ENCODE measurements at regions of chr4 and their contacts with region 1.

Region 1: GRCh38 chr4:55948726-55949474 is at the start of gene CEP135:
- DNase-seq: peak; percentile 96
- H3K4me3 Mint-ChIP-seq: peak within 1 kb of the TSS; percentile 80
- H3K27ac Mint-ChIP-seq: peak within 1 kb of the TSS; percentile 91
- H3K4me1 Mint-ChIP-seq: peaks cover 35% of the 10 kb centered on the region
- H3K27me3 Mint-ChIP-seq: no peaks in the 10 kb centered on the region
- total RNA-seq, gene CEP135: 15.5 to 16.8 TPM

Region 2: DNA sequence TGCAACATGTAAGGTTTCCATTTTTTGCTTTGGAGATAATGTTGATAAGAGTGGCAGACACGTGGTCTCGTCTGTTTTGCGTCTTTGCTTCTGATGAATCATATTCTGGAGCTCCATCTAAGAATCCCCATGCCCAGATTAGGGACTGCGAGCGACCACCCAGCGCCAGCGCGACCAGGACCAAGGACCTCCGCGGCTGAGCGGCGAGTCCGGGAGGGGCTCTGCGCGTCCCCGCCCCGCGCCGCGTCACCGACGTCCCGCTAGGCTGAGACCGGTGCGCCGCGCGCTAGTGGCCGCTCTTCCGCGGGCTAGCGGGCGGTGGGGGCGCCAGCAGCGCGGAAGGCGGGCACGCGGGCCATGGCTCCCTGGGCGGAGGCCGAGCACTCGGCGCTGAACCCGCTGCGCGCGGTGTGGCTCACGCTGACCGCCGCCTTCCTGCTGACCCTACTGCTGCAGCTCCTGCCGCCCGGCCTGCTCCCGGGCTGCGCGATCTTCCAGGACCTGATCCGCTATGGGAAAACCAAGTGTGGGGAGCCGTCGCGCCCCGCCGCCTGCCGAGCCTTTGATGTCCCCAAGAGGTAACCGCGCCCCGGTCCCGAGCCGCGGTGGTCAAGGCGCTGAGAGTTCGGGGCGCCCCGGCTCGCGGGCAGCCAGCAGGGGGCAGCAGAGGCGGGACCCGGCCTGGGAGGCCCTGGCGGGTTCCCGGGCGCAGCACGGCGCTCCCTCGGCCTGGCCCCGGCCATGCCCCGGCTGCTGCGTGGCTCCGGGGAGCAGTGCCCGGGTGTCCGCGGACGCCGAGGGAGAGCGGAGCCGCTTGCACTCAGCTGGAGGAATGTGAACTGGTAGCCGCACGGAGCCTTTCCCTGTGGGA is 602.7 kb before region 1 on chr4 and contains the start of gene SRD5A3:
- CTCF ChIA-PET with region 1: interaction called, 4 read pairs
- POLR2A ChIA-PET with region 1: no interaction called
- intact Hi-C with region 1: loop called (anchors 1 kb)
- DNase-seq: peak; percentile 85
- H3K4me3 Mint-ChIP-seq: peak within 1 kb of the TSS; percentile 82
- H3K27ac Mint-ChIP-seq: peak within 1 kb of the TSS; percentile 84
- H3K4me1 Mint-ChIP-seq: peaks cover 28% of the 10 kb centered on the region
- H3K27me3 Mint-ChIP-seq: no peaks in the 10 kb centered on the region
- total RNA-seq, gene SRD5A3: 19.2 to 19.7 TPM

Region 3: DNA sequence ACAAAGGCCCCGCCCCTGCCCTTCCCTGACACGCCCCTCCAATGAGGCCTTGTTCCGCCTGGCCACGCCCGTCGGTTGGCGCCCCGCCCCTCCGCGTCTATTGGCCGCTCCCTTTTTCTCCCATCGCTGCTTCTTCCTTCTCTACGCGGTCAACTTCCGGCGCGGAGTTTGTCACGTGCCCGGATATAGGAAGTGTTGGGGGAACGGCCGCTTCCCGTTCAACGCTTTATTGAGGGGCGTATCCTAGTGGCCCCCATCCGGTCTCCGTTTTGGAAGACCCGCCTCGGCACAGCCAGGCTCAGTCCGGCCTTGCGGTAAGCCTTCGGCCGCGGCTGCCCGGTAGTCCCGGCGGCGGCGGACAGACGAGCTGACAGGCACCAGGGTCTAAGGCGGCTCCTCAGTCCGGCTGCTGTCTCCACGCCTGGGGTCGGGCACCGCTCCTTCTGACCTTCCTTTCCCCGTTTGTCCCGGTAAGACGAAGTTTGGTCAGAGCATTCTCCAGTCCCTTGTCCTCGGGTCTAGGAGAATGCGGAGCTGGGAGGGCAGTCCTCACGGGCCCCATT is 95.3 kb before region 1 on chr4 and contains the start of gene EXOC1:
- CTCF ChIA-PET with region 1: interaction called, 4 read pairs
- POLR2A ChIA-PET with region 1: no interaction called
- intact Hi-C with region 1: loop called (anchors 1 kb)
- DNase-seq: peak; percentile 99
- H3K4me3 Mint-ChIP-seq: peak within 1 kb of the TSS; percentile 7
- H3K27ac Mint-ChIP-seq: peak within 1 kb of the TSS; percentile 82
- H3K4me1 Mint-ChIP-seq: peaks cover 33% of the 10 kb centered on the region
- H3K27me3 Mint-ChIP-seq: no peaks in the 10 kb centered on the region
- total RNA-seq, gene EXOC1: 21.9 to 22.4 TPM

Region 4: DNA sequence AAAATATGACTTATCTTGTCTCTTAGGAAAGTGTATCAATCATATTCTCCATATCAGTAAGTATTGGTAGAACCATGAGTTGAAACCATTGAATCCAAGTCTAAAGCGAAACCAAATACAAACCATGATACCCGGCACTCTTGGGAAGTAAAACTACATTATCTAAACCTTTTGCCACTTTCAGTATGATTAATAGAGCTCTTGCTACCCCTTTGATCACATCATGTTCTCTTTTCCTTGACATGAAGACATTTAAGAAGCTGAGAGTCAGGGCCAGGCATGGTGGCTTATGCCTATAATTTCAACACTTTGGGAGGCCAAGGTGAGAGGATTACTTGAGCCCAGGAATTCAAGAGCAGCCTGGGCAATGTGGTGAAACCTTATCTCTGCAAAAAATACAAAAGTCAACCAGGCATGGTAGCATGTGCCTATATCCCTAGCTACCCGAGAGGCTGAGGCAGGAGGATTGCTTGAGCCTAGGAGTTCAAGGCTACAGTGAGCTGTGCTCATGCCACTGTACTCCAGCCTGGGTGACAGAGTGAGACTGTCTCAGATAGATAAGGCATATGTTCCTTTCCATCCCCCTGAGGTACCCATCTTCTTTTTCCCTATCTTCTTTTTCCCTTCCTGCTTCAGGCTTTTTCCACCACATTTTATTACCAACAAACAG is 45.2 kb after region 1 on chr4:
- CTCF ChIA-PET with region 1: interaction called, 6 read pairs
- POLR2A ChIA-PET with region 1: no interaction called
- intact Hi-C with region 1: loop called (anchors 1 kb)
- DNase-seq: peak; percentile 20
- H3K4me3 Mint-ChIP-seq: no peak overlapping the region
- H3K27ac Mint-ChIP-seq: no peak overlapping the region
- H3K4me1 Mint-ChIP-seq: peaks cover 28% of the 10 kb centered on the region
- H3K27me3 Mint-ChIP-seq: no peaks in the 10 kb centered on the region

Region 5: DNA sequence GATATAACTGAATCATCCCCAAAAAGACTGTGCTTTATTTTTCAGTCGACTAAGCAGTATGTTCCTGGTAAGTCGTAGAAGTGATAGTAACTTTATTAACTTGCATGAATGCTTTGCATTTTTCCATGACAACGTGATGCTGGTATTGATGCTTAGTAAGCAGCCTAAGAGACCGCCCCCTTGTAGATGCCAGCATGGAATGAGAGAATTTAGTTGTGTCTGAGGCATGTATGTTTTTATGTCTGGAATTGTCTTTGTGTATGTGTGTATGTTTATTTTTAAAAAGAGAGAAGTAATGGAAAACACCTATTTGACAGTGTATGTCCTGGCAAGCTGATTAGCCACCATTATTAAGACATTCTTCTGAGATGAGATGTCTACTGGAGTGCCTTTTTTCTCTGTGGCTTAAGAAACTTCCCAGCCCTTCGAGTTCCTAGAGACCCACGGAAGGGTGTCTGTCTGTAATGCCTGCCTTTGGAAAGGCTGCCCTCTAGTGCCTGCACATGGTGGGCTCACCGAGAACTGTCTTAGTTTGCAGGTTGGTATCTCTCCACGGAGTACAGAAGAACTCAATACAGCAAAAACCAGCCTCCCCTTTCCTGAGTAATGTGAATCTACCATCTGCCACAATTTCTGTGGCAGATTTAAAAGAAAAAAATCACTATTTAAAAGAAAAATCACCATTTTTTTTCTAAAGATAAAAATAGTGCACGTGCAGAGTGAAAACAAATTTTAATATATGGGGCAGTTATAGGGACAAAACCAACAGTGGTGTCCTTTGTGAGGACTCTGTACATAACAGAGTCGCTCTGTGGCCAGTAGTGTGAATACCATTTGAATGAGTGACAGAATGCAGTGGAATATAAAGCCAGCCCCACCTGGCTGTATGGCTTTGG is 352.5 kb after region 1 on chr4:
- CTCF ChIA-PET with region 1: interaction called, 9 read pairs
- POLR2A ChIA-PET with region 1: no interaction called
- intact Hi-C with region 1: loop called (anchors 1 kb)
- DNase-seq: peak; percentile 78
- H3K4me3 Mint-ChIP-seq: peak overlapping the region; percentile 13
- H3K27ac Mint-ChIP-seq: no peak overlapping the region
- H3K4me1 Mint-ChIP-seq: peaks cover 7% of the 10 kb centered on the region
- H3K27me3 Mint-ChIP-seq: no peaks in the 10 kb centered on the region

Region 6: DNA sequence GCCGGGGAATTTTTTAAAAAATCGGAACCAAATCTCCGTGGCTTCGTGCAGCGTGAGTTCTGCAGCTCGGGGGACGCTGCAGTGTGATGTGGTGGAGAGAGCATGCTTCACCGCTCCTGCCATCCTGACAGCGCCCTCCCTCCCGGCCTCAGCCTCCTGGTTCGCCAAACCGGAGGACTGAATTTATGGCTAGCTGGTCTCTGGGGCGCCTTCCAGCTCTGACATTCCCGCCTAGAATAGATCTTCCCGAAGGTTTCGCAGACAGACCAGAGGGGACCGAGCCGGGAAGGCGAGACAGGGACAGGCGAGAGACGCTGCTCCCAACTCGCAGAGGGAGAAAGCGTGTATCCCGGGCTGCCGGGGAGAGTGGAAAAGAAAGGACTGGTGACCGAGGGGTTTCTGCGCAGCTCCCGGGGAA is 706.3 kb after region 1 on chr4:
- CTCF ChIA-PET with region 1: no interaction called
- POLR2A ChIA-PET with region 1: no interaction called
- intact Hi-C with region 1: loop called (anchors 10 kb)
- DNase-seq: peak; percentile 31
- H3K4me3 Mint-ChIP-seq: peak overlapping the region; percentile 87
- H3K27ac Mint-ChIP-seq: peak overlapping the region; percentile 87
- H3K4me1 Mint-ChIP-seq: peaks cover 60% of the 10 kb centered on the region
- H3K27me3 Mint-ChIP-seq: peaks cover 38% of the 10 kb centered on the region